Naive thymus-derived CD4-positive, alpha-beta T cell (primary cell): ENCODE measurements at regions of chr17 and their contacts with region 1.

Region 1: GRCh38 chr17:27293898-27294688 is at the start of gene WSB1:
- DNase-seq: peak; percentile 91 to 96 (median 94)
- ATAC-seq: peak; percentile 94
- H3K4me3 ChIP-seq: peak within 1 kb of the TSS; percentile 99
- H3K4me3 Mint-ChIP-seq: peak within 1 kb of the TSS; percentile 90 to 100 (median 96)
- H3K27ac ChIP-seq: peak within 1 kb of the TSS; percentile 96
- H3K27ac Mint-ChIP-seq: peak within 1 kb of the TSS; percentile 94 to 100 (median 99)
- H3K4me1 ChIP-seq: peaks cover 19 to 34% of the 10 kb centered on the region in 2 donors
- H3K4me1 Mint-ChIP-seq: peaks cover 21 to 51% (median 43%) of the 10 kb centered on the region in 7 donors
- H3K27me3 ChIP-seq: no peaks in the 10 kb centered on the region
- H3K27me3 Mint-ChIP-seq: no peaks in the 10 kb centered on the region
- total RNA-seq, gene WSB1: 110 to 185 (median 134) TPM

Region 2: DNA sequence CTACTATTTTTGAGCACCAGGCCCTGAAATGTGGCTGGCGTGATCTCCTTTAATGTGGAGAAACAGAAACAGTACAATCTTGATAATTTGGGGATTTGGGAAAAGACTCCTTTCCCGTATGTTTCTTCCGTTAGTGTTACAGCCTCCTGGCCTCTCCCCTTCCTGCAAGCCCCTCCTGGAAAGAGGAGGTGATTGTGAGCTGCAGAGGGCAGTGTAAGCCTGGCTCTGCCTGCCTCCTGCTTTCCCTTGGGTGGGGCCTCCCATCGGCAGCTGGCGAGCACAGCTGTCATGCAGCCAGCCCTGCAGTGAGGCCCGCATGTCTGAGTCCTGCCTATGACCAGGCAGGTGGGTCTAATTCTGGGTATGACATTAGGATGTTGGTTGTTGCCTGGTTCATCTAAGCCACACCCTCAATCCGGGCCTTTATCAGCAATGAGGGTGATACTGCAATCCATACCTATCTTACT is 48.8 kb before region 1 on chr17:
- CTCF ChIA-PET with region 1: no interaction called
- POLR2A ChIA-PET with region 1: interaction called, 4 read pairs
- intact Hi-C with region 1: loop called in 1 of 2 experiments (anchors 2 kb)
- DNase-seq: peak in 8 of 9 donors; percentile 3 to 38 (median 20)
- ATAC-seq: peak; percentile 73
- H3K4me3 ChIP-seq: no peak overlapping the region
- H3K4me3 Mint-ChIP-seq: no peak overlapping the region
- H3K27ac ChIP-seq: no peak overlapping the region
- H3K27ac Mint-ChIP-seq: no peak overlapping the region
- H3K4me1 ChIP-seq: no peaks in the 10 kb centered on the region
- H3K4me1 Mint-ChIP-seq: peaks cover 0 to 21% (median 5%) of the 10 kb centered on the region in 7 donors
- H3K27me3 ChIP-seq: no peaks in the 10 kb centered on the region
- H3K27me3 Mint-ChIP-seq: peaks cover 4 to 31% (median 7%) of the 10 kb centered on the region in 5 donors

Region 3: DNA sequence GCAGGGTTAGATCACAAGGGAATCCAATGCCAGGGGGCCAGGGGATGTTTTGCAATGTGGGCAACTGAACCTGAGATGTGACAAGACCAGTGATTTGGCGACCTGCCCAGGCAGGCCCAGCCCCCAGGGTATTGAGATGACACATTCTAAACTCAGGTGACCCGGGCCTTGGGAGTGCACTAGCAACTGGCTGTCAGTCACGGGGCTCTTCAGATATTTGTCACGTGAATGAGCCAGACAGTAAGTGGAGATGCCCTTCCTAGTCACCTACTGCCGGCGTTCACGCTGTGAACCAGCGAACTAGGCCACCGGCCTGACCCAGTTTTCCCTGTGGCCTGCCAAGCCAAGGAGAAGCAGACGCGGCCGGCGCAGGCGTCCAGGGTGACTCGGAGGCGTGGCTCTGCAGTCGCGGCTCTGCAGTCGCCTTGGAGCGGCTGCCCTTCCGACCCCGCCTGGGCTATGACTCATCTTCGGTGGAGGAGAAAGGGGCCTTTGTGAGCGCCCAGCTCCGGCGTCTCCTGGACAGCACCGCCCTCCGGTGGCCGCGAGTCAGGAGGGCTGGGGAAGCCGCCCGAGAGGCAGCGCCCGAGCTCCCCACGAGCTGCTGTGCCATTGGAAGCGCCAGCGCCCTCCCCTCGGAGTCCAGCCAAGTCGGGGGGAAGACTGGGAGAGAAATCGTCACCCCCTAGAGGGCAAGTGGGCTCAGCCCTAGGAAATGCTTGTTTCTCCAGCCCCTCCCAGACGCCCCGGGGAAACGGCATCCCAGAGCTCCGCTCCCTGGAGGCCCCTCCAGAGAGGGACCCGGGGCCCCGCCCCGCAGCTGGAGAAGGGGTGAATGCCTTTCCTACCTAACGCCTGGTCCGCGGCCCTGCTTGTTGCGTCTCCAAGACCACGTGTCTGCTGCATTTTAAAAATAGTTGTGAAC is 38.7 kb after region 1 on chr17:
- CTCF ChIA-PET with region 1: interaction called, 4 read pairs
- POLR2A ChIA-PET with region 1: interaction called, 9 read pairs
- intact Hi-C with region 1: loop called (anchors 1 kb)
- DNase-seq: peak; percentile 49 to 90 (median 71)
- ATAC-seq: peak; percentile 94
- H3K4me3 ChIP-seq: peak overlapping the region; percentile 72
- H3K4me3 Mint-ChIP-seq: peak overlapping the region; percentile 75 to 90 (median 86)
- H3K27ac ChIP-seq: peak overlapping the region; percentile 23
- H3K27ac Mint-ChIP-seq: peak overlapping the region in 8 of 9 donors; percentile 43 to 92 (median 80)
- H3K4me1 ChIP-seq: peaks cover 6 to 10% of the 10 kb centered on the region in 2 donors
- H3K4me1 Mint-ChIP-seq: peaks cover 6 to 25% (median 18%) of the 10 kb centered on the region in 7 donors
- H3K27me3 ChIP-seq: no peaks in the 10 kb centered on the region
- H3K27me3 Mint-ChIP-seq: peaks cover 0 to 3% (median 0%) of the 10 kb centered on the region in 5 donors

Region 4: GRCh38 chr17:27407916-27408846 is 114.1 kb after region 1 on chr17:
- CTCF ChIA-PET with region 1: no interaction called
- POLR2A ChIA-PET with region 1: no interaction called
- intact Hi-C with region 1: no loop called
- DNase-seq: no peak
- ATAC-seq: no peak
- H3K4me3 ChIP-seq: no peak overlapping the region
- H3K4me3 Mint-ChIP-seq: no peak overlapping the region
- H3K27ac ChIP-seq: no peak overlapping the region
- H3K27ac Mint-ChIP-seq: no peak overlapping the region
- H3K4me1 ChIP-seq: no peaks in the 10 kb centered on the region
- H3K4me1 Mint-ChIP-seq: no peaks in the 10 kb centered on the region
- H3K27me3 ChIP-seq: no peaks in the 10 kb centered on the region
- H3K27me3 Mint-ChIP-seq: peaks cover 0 to 9% (median 0%) of the 10 kb centered on the region in 5 donors

Region 5: GRCh38 chr17:27473748-27474609 is 179.9 kb after region 1 on chr17:
- CTCF ChIA-PET with region 1: no interaction called
- POLR2A ChIA-PET with region 1: no interaction called
- intact Hi-C with region 1: loop called in 1 of 2 experiments (anchors 5 kb)
- DNase-seq: peak in 6 of 9 donors; percentile 12 to 76 (median 18)
- ATAC-seq: peak; percentile 85
- H3K4me3 ChIP-seq: peak overlapping the region; percentile 11
- H3K4me3 Mint-ChIP-seq: peak overlapping the region; percentile 16 to 86 (median 64)
- H3K27ac ChIP-seq: peak overlapping the region; percentile 43
- H3K27ac Mint-ChIP-seq: peak overlapping the region; percentile 76 to 97 (median 89)
- H3K4me1 ChIP-seq: peaks cover 19 to 44% of the 10 kb centered on the region in 2 donors
- H3K4me1 Mint-ChIP-seq: peaks cover 41 to 89% (median 49%) of the 10 kb centered on the region in 7 donors
- H3K27me3 ChIP-seq: no peaks in the 10 kb centered on the region
- H3K27me3 Mint-ChIP-seq: no peaks in the 10 kb centered on the region

Region 6: GRCh38 chr17:28041068-28041843 is 747.2 kb after region 1 on chr17:
- CTCF ChIA-PET with region 1: no interaction called
- POLR2A ChIA-PET with region 1: no interaction called
- intact Hi-C with region 1: loop called in 1 of 2 experiments (anchors 1 kb)
- DNase-seq: peak; percentile 94 to 99 (median 99)
- ATAC-seq: peak; percentile 96
- H3K4me3 ChIP-seq: peak overlapping the region; percentile 45
- H3K4me3 Mint-ChIP-seq: peak overlapping the region; percentile 82 to 92 (median 88)
- H3K27ac ChIP-seq: peak overlapping the region; percentile 71
- H3K27ac Mint-ChIP-seq: peak overlapping the region; percentile 75 to 93 (median 88)
- H3K4me1 ChIP-seq: peaks cover 28 to 40% of the 10 kb centered on the region in 2 donors
- H3K4me1 Mint-ChIP-seq: peaks cover 35 to 65% (median 60%) of the 10 kb centered on the region in 7 donors
- H3K27me3 ChIP-seq: no peaks in the 10 kb centered on the region
- H3K27me3 Mint-ChIP-seq: peaks cover 0 to 16% (median 0%) of the 10 kb centered on the region in 5 donors